ENCODE measurements at regions of chr9 and their contacts with region 1.

Region 1: DNA sequence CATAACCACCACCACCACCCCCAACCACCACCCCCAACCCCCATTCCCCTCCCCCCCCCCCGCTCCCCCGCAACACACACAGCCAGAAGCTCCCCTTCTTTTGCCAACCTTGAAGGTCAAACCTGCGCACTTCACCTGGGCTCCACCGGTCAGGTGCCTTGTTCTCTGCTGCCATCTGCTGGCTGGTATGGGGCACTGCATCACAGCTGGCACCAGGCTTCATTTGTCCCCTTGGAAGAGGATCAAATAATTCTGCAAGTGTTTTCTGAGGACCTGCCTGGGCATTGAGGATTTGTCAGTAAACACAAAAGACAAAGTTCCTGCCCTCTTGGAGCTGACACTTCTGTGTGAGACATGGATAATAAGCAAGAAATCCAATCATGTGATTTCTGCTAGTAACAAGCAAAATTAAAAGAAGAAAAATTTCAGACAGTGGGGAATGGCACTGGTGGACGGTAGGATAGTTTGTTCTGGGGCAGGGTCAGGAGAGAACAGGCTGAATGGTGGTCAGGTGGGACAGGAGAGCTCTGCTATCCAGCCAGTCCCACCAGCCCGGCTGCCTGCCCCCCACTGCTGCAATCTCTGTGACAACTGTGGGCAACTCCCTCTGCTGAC is 55.6 kb upstream of the LMX1B start:
- DNase-seq: peak; percentile 40 to 90 (median 66)
- H3K4me3 ChIP-seq: no peak overlapping the region
- H3K27ac ChIP-seq: no peak overlapping the region
- H3K4me1 ChIP-seq: no peaks in the 10 kb centered on the region
- H3K27me3 ChIP-seq: peaks cover 20% of the 10 kb centered on the region
- CTCF ChIP-seq: peak; percentile 82 to 97 (median 87)
- POLR2A ChIP-seq: no peak

Region 2: DNA sequence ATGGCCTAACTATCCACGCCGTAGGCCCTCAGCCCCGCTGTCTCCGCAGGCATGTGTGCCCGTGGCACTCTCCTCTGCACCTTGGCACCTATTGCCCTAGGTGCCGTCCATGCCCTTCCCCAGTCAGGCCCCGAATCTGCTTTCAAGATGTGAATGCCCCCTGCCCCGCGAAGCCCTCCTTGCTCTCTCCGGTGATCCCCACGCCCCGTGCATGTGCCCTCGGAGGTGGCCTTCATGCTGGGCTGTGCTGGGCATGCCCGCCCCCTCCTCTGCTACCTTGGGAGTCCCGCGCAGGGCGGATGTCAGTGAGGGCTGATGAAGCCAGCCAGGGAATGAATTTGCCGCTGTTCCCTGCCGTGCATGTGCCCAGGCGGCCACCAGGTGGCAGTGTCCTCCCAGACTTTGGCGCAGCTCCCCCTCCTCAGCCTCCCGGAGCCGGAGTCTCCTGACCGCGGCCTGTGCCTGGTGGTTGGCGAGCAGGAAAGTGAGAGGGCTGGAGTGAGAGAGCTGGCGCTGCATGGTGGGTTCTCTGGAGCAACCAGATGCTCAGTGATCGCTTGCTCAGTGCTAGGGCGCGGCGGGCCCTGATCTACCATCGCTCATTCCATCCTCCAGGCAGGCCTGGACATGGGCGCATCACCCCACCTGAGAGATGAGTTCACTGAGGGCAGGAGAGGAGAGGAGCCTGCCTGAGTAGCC is 57.3 kb before region 1 on chr9:
- intact Hi-C with region 1: loop called (anchors 2 to 5 kb)
- DNase-seq: peak; percentile 59 to 92 (median 75)
- H3K4me3 ChIP-seq: no peak overlapping the region
- H3K27ac ChIP-seq: no peak overlapping the region
- H3K4me1 ChIP-seq: peaks cover 0 to 16% of the 10 kb centered on the region in 2 donors
- H3K27me3 ChIP-seq: no peaks in the 10 kb centered on the region
- CTCF ChIP-seq: peak; percentile 88 to 96 (median 94)
- POLR2A ChIP-seq: no peak